Activated CD8-positive, alpha-beta T cell treated with anti-CD3 and anti-CD28 coated beads, Interleukin-2, amount 10 ng/mL, durations not matched to agents 7 days and 5 days (primary cell): ENCODE measurements at regions of chr1 and their contacts with region 1.

Region 1: GRCh38 chr1:205061665-205062069 is 18.7 kb downstream of the CNTN2 start:
- DNase-seq: peak; percentile 81
- ATAC-seq: peak; percentile 72
- H3K4me3 Mint-ChIP-seq: no peak overlapping the region
- H3K27ac Mint-ChIP-seq: no peak overlapping the region
- H3K4me1 Mint-ChIP-seq: no peaks in the 10 kb centered on the region
- H3K27me3 Mint-ChIP-seq: no peaks in the 10 kb centered on the region

Region 2: GRCh38 chr1:204792354-204792692 is 269.3 kb before region 1 on chr1:
- CTCF ChIA-PET with region 1: no interaction called
- POLR2A ChIA-PET with region 1: no interaction called
- DNase-seq: no peak
- ATAC-seq: no peak
- H3K4me3 Mint-ChIP-seq: no peak overlapping the region
- H3K27ac Mint-ChIP-seq: no peak overlapping the region
- H3K4me1 Mint-ChIP-seq: peaks cover 2% of the 10 kb centered on the region
- H3K27me3 Mint-ChIP-seq: peaks cover 23% of the 10 kb centered on the region

Region 3: DNA sequence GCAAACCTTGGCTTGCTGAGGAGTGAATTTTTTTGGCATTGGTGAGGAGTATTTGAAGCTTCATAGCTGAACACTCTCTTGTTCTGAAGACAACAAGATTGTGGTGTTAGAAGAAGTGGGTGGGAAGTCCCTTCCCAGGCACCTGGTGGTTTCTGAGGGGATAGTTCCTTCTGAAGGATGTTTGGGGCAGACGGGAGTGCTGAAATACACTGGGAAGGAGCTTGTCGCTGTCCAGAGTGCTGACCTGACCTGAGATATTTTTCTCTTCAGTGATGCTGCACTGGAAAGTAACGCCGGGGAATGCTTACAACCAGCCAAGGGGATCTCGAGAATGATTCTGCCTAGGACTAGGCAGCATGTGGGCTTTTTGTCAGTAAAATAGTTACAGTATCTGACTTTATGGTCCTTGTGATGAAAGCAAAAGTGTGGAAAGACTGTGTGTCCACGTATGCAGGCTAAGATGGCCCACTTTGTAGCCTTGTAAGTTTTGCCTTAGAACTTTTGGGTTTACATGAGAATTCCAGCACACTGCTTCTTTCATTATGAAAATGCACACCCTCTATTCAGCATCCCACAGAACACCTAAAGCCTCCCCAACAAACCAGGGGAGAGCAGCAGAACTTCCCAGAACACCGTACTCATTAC is 224.1 kb before region 1 on chr1:
- CTCF ChIA-PET with region 1: no interaction called
- POLR2A ChIA-PET with region 1: no interaction called
- DNase-seq: peak; percentile 47
- ATAC-seq: no peak
- H3K4me3 Mint-ChIP-seq: no peak overlapping the region
- H3K27ac Mint-ChIP-seq: no peak overlapping the region
- H3K4me1 Mint-ChIP-seq: no peaks in the 10 kb centered on the region
- H3K27me3 Mint-ChIP-seq: peaks cover 12% of the 10 kb centered on the region

Region 4: GRCh38 chr1:204975570-204976235 is 86.0 kb before region 1 on chr1:
- CTCF ChIA-PET with region 1: interaction called, 76 read pairs
- POLR2A ChIA-PET with region 1: no interaction called
- DNase-seq: peak; percentile 58
- ATAC-seq: peak; percentile 81
- H3K4me3 Mint-ChIP-seq: no peak overlapping the region
- H3K27ac Mint-ChIP-seq: no peak overlapping the region
- H3K4me1 Mint-ChIP-seq: peaks cover 21% of the 10 kb centered on the region
- H3K27me3 Mint-ChIP-seq: peaks cover 11% of the 10 kb centered on the region

Region 5: DNA sequence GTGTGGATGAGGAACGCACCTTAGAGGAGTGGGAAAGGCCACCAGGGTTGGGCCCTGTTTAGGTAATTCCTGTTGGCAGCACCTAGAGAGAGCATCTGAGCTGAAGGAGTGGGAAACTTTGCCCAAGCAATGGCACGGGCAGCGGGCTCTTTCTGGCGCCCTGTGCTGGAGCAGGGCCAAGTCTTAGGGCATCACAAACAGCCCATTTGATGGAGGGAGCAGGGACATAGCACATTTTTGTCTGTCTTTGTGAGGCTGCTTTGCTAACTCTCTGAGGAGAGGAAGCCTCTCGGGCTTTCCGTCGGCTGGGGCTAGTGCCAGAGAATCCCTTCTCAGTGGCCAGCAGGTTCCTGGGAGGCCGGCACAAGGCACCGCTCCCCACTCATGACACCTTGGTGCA is 41.2 kb before region 1 on chr1:
- CTCF ChIA-PET with region 1: interaction called, 13 read pairs
- POLR2A ChIA-PET with region 1: no interaction called
- DNase-seq: no peak
- ATAC-seq: no peak
- H3K4me3 Mint-ChIP-seq: no peak overlapping the region
- H3K27ac Mint-ChIP-seq: no peak overlapping the region
- H3K4me1 Mint-ChIP-seq: no peaks in the 10 kb centered on the region
- H3K27me3 Mint-ChIP-seq: peaks cover 4% of the 10 kb centered on the region

Region 6: DNA sequence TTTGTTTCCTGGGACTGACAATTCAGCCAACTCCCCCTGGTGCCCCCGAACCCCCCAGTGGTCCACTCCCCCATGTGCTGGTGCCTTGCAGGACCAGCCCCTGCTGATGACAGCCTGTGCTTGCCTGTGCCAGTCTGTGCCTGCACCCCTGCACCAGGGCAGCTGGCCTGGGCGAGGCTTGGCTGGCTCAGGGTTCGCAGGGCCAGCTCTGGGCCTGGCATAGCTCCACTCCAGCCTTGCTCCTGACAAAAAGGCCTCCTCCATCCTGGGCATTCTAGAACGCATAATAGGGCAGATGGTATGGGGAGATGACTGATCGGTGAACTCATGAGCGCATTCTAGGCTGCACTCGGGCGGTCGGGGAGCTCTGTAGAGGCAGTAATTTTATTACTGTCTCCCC is 13.3 kb before region 1 on chr1:
- CTCF ChIA-PET with region 1: interaction called, 19 read pairs
- POLR2A ChIA-PET with region 1: interaction called, 3 read pairs
- DNase-seq: no peak
- ATAC-seq: no peak
- H3K4me3 Mint-ChIP-seq: no peak overlapping the region
- H3K27ac Mint-ChIP-seq: no peak overlapping the region
- H3K4me1 Mint-ChIP-seq: no peaks in the 10 kb centered on the region
- H3K27me3 Mint-ChIP-seq: peaks cover 33% of the 10 kb centered on the region

Region 7: GRCh38 chr1:205091043-205091740 is 29.5 kb after region 1 on chr1:
- CTCF ChIA-PET with region 1: interaction called, 26 read pairs
- POLR2A ChIA-PET with region 1: no interaction called
- DNase-seq: no peak
- ATAC-seq: no peak
- H3K4me3 Mint-ChIP-seq: no peak overlapping the region
- H3K27ac Mint-ChIP-seq: no peak overlapping the region
- H3K4me1 Mint-ChIP-seq: no peaks in the 10 kb centered on the region
- H3K27me3 Mint-ChIP-seq: no peaks in the 10 kb centered on the region

Region 8: GRCh38 chr1:205255941-205256780 is 194.5 kb after region 1 on chr1:
- CTCF ChIA-PET with region 1: interaction called, 39 read pairs
- POLR2A ChIA-PET with region 1: no interaction called
- DNase-seq: peak; percentile 88
- ATAC-seq: peak; percentile 94
- H3K4me3 Mint-ChIP-seq: no peak overlapping the region
- H3K27ac Mint-ChIP-seq: no peak overlapping the region
- H3K4me1 Mint-ChIP-seq: peaks cover 5% of the 10 kb centered on the region
- H3K27me3 Mint-ChIP-seq: peaks cover 2% of the 10 kb centered on the region